PC-9 (cell line): ENCODE measurements at regions of chr2 and their contacts with region 1.

Region 1: GRCh38 chr2:11778923-11779757 is 32.7 kb downstream of the LPIN1 start:
- DNase-seq: peak; percentile 54 to 68
- H3K4me3 ChIP-seq: no peak overlapping the region
- H3K27ac ChIP-seq: no peak overlapping the region
- H3K4me1 ChIP-seq: peaks cover 7% of the 10 kb centered on the region; the same call in 1 of the 2 replicates
- H3K27me3 ChIP-seq: no peaks in the 10 kb centered on the region
- CTCF ChIP-seq: peak; percentile 100

Region 2: GRCh38 chr2:11213090-11213638 is 566.0 kb before region 1 on chr2:
- CTCF ChIA-PET with region 1: interaction called, 10 read pairs
- POLR2A ChIA-PET with region 1: no interaction called
- intact Hi-C with region 1: no loop called
- DNase-seq: no peak
- H3K4me3 ChIP-seq: no peak overlapping the region
- H3K27ac ChIP-seq: no peak overlapping the region
- H3K4me1 ChIP-seq: no peaks in the 10 kb centered on the region
- H3K27me3 ChIP-seq: no peaks in the 10 kb centered on the region
- CTCF ChIP-seq: no peak

Region 3: GRCh38 chr2:11477994-11478393 is 301.1 kb before region 1 on chr2:
- CTCF ChIA-PET with region 1: no interaction called
- POLR2A ChIA-PET with region 1: no interaction called
- intact Hi-C with region 1: loop called (anchors 2 kb)
- DNase-seq: peak; percentile 53 to 72
- H3K4me3 ChIP-seq: no peak overlapping the region
- H3K27ac ChIP-seq: no peak overlapping the region
- H3K4me1 ChIP-seq: no peaks in the 10 kb centered on the region
- H3K27me3 ChIP-seq: no peaks in the 10 kb centered on the region
- CTCF ChIP-seq: peak; percentile 97

Region 4: DNA sequence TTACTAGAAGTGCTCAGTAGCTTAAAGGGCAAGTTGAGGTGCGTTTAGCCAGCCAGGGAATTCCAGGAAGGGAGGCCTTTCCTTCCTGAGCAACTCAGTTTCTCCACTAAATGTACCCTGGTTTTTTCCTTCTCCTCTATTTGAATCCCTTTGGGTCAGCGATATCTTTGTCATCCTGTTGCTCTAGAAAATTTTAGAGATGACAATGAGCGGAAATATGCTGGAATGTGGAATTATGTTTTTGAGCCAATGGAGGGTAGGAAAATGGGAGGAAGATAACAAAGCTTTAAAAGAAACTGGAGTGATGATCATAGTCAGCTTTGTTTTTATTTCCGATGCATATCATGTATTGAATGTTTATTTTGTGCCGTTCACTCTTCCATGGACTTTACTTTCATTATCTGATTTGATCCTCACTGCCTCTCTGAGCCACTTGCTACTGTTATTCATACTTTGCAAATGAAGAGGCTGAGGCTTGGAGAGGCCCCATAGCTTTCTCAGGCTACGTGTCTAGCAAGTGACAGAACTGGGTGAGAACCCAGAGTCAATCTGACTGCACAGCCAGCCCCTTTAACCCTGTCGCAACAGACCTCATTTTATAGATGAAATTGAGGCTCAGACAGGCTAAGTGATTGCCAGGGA is 176.5 kb before region 1 on chr2:
- CTCF ChIA-PET with region 1: no interaction called
- POLR2A ChIA-PET with region 1: no interaction called
- intact Hi-C with region 1: loop called (anchors 5 kb)
- DNase-seq: no peak
- H3K4me3 ChIP-seq: no peak overlapping the region
- H3K27ac ChIP-seq: no peak overlapping the region
- H3K4me1 ChIP-seq: peaks cover 9% of the 10 kb centered on the region
- H3K27me3 ChIP-seq: peaks cover 59% of the 10 kb centered on the region
- CTCF ChIP-seq: no peak

Region 5: GRCh38 chr2:11688222-11689069 is 90.7 kb before region 1 on chr2:
- CTCF ChIA-PET with region 1: interaction called, 14 read pairs
- POLR2A ChIA-PET with region 1: no interaction called
- intact Hi-C with region 1: loop called (anchors 1 kb)
- DNase-seq: peak; percentile 78 to 90
- H3K4me3 ChIP-seq: peak overlapping the region; percentile 53
- H3K27ac ChIP-seq: peak overlapping the region; percentile 82
- H3K4me1 ChIP-seq: peaks cover 42% of the 10 kb centered on the region
- H3K27me3 ChIP-seq: no peaks in the 10 kb centered on the region
- CTCF ChIP-seq: peak; percentile 99

Region 6: GRCh38 chr2:11703700-11704099 is 75.4 kb before region 1 on chr2:
- CTCF ChIA-PET with region 1: no interaction called
- POLR2A ChIA-PET with region 1: no interaction called
- intact Hi-C with region 1: no loop called
- DNase-seq: peak in 1 of 2 experiments; percentile 80
- H3K4me3 ChIP-seq: no peak overlapping the region
- H3K27ac ChIP-seq: 0 out of 2 replicates have a peak overlapping the region, but pooled peaks have one; percentile 3
- H3K4me1 ChIP-seq: peaks cover 80% of the 10 kb centered on the region
- H3K27me3 ChIP-seq: no peaks in the 10 kb centered on the region
- CTCF ChIP-seq: no peak

Region 7: GRCh38 chr2:11738589-11739436 is 40.3 kb before region 1 on chr2:
- CTCF ChIA-PET with region 1: interaction called, 4 read pairs
- POLR2A ChIA-PET with region 1: interaction called, 4 read pairs
- intact Hi-C with region 1: loop called (anchors 1 kb)
- DNase-seq: peak; percentile 87 to 95
- H3K4me3 ChIP-seq: peak overlapping the region; percentile 6; the same call in 1 of the 2 replicates
- H3K27ac ChIP-seq: peak overlapping the region; percentile 72
- H3K4me1 ChIP-seq: peaks cover 51% of the 10 kb centered on the region
- H3K27me3 ChIP-seq: no peaks in the 10 kb centered on the region
- CTCF ChIP-seq: peak; percentile 65

Region 8: DNA sequence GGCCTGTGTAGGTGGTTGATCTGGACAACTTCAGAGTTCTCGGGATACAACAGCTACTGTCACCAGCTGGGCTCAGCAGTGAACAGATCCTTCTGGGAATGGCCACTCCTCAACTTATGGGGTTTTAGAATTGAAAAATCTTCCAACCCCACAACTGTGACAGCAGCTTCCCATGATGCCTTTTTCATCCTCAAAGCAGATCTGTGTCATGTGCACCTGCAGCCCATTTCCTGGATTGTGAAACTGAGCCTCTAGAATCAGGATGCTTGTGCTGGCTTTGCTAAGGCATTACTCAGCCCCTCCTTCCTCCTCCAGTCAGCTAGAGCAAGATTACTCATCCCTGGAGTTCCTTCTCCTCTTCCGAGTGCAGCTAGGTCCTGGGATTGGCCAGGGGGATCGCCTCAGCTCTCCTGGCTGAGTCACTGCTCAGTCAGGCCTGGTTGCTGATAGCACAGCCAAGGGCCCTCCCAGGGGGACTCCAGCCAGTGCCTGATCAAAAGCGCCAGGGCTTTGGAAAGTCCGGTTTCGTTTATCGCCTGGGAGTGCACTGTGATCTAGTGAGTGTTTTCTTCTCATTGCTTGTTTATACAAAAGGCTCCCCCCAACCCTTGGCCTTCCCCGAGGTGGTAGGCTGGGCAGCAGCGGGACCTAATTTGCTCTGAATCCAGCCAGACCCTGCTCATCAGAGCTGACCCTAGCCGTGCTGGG is 35.1 kb before region 1 on chr2:
- CTCF ChIA-PET with region 1: interaction called, 4 read pairs
- POLR2A ChIA-PET with region 1: no interaction called
- intact Hi-C with region 1: loop called (anchors 1 kb)
- DNase-seq: peak; percentile 94 to 100
- H3K4me3 ChIP-seq: peak overlapping the region; percentile 37; the same call in 1 of the 2 replicates
- H3K27ac ChIP-seq: peak overlapping the region; percentile 79
- H3K4me1 ChIP-seq: peaks cover 74% of the 10 kb centered on the region
- H3K27me3 ChIP-seq: no peaks in the 10 kb centered on the region
- CTCF ChIP-seq: no peak

Region 9: DNA sequence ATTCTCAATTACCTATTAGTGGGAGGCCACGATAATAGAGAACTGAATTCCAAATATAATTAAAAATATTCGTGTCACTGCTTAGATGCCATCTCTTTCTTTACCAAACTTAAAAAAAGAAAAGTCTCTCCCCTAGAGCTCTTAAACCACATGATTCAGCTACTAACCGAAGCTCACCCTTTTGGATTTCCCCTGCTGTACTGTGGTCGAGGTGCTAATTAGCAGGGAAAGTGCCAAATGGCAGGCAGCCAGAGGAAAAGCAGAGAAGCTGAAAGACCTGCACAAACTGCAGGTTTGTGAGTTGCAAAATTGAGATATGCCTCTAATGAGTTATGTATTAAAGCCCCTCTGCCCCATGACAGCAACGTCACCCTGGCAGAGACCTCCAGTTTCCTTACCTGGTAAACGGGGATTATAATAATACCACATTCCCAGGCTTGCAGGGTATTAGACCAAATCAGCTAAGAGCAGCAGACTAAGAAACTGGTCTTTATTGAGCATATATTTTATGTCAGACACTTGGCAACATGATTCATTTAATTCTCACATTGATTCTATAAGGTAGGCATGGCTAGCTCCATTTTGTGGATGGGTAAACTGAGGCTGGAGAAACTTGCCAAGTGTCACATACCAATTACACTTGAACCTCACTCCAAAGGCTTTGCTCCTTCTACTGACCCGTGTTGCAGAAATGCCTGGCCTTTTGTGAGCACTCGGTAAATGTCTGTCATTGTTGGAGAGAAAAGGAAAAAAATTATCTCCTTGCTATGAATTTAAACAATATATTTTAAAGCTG is 226.9 kb after region 1 on chr2:
- CTCF ChIA-PET with region 1: no interaction called
- POLR2A ChIA-PET with region 1: no interaction called
- intact Hi-C with region 1: no loop called
- DNase-seq: peak; percentile 55 to 60
- H3K4me3 ChIP-seq: no peak overlapping the region
- H3K27ac ChIP-seq: no peak overlapping the region
- H3K4me1 ChIP-seq: peaks cover 40% of the 10 kb centered on the region
- H3K27me3 ChIP-seq: no peaks in the 10 kb centered on the region
- CTCF ChIP-seq: no peak